Psoas muscle (tissue), 8 donors: ENCODE measurements at regions of chr11 and their contacts with region 1.

Region 1: DNA sequence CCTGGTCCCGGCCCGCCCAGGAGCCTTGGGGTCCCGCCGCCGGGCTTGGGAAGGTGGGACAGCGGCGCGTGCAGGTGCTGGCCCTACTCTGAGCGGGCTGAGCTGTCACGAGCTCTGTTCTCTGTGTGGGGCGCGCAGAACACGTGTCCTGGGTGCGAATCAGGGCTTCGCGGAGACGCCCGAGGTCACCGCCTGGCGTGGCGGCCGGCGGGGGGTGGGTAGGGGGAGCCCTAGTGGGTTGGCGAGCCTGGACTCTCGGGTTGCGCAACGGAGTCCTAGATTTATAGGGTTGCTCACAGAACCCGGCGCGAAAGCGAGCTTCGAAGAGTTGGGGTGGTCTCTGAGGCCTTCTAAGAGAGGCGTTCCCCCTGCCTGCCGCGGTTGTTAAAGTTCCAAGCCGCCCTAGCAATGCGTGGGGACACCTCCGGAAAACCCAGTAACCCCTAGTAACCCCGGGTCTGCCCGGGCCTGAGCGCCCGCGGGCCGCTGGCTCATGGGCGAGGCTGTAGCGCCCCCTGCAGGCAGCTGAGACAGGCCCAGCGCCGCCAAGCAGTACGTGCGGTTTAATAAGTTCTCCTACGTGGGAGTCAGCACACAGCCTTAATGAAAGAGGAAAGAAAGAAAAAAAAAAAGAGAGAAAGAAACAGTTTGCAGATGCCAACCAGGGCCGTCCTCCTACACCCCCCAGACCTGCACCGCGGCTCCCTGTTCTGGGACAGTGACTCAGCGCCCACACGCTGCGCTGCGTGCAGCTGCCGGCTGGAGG is 2.8 kb downstream of the ADM start:
- DNase-seq: peak; percentile 87 to 94
- ATAC-seq: peak; percentile 73 to 77 (median 74)
- H3K4me3 ChIP-seq: peak overlapping the region; percentile 84
- H3K27ac ChIP-seq: peak overlapping the region; percentile 86
- H3K4me1 ChIP-seq: peaks cover 35% of the 10 kb centered on the region
- H3K27me3 ChIP-seq: no peaks in the 10 kb centered on the region
- CTCF ChIP-seq: peak; percentile 99

Region 2: GRCh38 chr11:9861860-9862725 is 445.5 kb before region 1 on chr11:
- intact Hi-C with region 1: loop called in 1 of 2 experiments (anchors 5 kb)
- DNase-seq: peak; percentile 26 to 57
- ATAC-seq: peak; percentile 75 to 91 (median 80)
- H3K4me3 ChIP-seq: no peak overlapping the region
- H3K27ac ChIP-seq: no peak overlapping the region
- H3K4me1 ChIP-seq: no peaks in the 10 kb centered on the region
- H3K27me3 ChIP-seq: no peaks in the 10 kb centered on the region
- CTCF ChIP-seq: peak; percentile 63

Region 3: GRCh38 chr11:9972989-9973388 is 334.6 kb before region 1 on chr11:
- intact Hi-C with region 1: loop called (anchors 5 to 10 kb)
- DNase-seq: no peak
- ATAC-seq: peak; percentile 59 to 87 (median 68)
- H3K4me3 ChIP-seq: no peak overlapping the region
- H3K27ac ChIP-seq: no peak overlapping the region
- H3K4me1 ChIP-seq: peaks cover 7% of the 10 kb centered on the region
- H3K27me3 ChIP-seq: no peaks in the 10 kb centered on the region
- CTCF ChIP-seq: peak; percentile 72

Region 4: DNA sequence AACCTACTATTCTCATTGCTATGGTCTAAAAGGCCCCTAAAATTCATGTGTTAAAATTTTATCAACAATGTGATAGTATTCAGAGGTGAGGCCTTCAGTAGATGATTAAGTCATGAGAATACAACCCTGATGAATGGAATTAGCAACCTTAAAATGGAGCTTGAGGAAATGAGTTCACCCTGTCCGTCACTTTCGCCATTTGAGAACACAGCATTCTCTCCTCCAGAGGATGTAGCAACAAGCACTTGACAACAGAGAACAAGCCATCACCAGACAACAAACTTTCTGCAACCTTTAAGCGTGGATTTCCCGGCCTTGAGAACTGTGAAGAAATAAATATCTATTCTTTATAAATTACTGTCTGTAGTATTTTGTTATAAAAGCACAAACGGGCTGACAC is 210.6 kb before region 1 on chr11:
- intact Hi-C with region 1: no loop called
- DNase-seq: no peak
- ATAC-seq: no peak
- H3K4me3 ChIP-seq: no peak overlapping the region
- H3K27ac ChIP-seq: no peak overlapping the region
- H3K4me1 ChIP-seq: no peaks in the 10 kb centered on the region
- H3K27me3 ChIP-seq: no peaks in the 10 kb centered on the region
- CTCF ChIP-seq: no peak

Region 5: DNA sequence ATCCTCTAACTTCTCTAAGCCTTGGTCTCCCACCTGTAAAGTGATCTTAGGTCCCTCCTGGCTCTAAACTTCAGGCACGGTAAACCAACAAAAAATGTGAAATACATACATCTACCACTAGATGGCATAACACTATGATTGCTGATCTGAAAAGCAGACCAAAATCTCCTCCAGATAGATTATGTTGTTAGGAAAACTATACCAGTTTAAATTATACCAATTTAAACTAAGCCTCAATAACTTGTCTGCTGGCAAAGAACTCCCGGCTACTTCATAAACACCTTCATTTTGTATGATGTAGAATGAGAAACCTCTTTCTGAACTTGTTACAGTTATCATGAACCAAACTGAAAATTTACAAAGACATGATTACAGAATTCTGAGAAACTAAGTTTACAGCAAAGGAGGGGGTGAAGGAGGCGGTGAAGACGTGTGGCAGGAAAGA is 99.5 kb before region 1 on chr11:
- intact Hi-C with region 1: loop called (anchors 2 to 5 kb)
- DNase-seq: no peak
- ATAC-seq: peak; percentile 53 to 82 (median 64)
- H3K4me3 ChIP-seq: no peak overlapping the region
- H3K27ac ChIP-seq: no peak overlapping the region
- H3K4me1 ChIP-seq: peaks cover 4% of the 10 kb centered on the region
- H3K27me3 ChIP-seq: no peaks in the 10 kb centered on the region
- CTCF ChIP-seq: peak; percentile 82

Region 6: DNA sequence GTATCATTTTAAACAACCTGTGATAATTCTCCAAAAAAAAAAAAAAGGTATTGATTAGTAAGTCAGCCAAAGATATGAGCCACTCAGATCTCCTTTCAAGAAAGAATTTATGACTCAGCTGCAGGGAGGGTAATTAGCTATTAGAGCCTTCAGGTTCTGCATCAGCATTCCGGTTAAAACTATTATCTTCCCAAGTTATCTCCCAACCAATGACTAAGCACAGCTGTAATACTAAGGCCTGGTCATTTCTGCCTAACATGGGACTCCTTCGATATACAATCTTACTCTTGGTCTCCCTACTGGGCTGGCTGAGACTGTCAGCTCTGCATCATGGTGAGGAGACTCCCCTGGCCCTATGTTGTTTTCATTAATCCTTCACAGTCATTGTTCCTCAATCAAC is 74.0 kb before region 1 on chr11:
- intact Hi-C with region 1: no loop called
- DNase-seq: no peak
- ATAC-seq: no peak
- H3K4me3 ChIP-seq: no peak overlapping the region
- H3K27ac ChIP-seq: no peak overlapping the region
- H3K4me1 ChIP-seq: no peaks in the 10 kb centered on the region
- H3K27me3 ChIP-seq: no peaks in the 10 kb centered on the region
- CTCF ChIP-seq: no peak

Region 7: DNA sequence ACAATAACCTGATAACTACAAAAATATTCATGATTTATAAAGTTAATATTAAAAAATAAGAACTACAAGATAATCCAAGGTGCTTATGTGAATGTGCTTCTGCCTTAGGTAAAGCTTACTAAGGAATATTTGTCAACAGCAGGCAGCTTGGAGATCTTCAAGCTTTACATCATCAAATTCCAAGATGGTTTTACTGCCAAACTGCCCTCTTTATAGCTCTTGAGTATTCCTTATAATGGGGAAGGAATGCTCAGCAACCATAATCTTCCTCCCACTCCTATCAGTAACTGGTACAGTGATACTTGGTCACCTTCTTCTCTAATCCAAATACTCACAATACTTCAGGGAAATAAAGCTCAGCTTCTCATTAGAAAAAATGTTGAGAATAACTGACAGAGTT is 43.7 kb before region 1 on chr11:
- intact Hi-C with region 1: no loop called
- DNase-seq: no peak
- ATAC-seq: no peak
- H3K4me3 ChIP-seq: no peak overlapping the region
- H3K27ac ChIP-seq: no peak overlapping the region
- H3K4me1 ChIP-seq: no peaks in the 10 kb centered on the region
- H3K27me3 ChIP-seq: no peaks in the 10 kb centered on the region
- CTCF ChIP-seq: no peak